Head of caudate nucleus (tissue), 42 donors: ENCODE measurements at regions of chr1 and their contacts with region 1.

Region 1: DNA sequence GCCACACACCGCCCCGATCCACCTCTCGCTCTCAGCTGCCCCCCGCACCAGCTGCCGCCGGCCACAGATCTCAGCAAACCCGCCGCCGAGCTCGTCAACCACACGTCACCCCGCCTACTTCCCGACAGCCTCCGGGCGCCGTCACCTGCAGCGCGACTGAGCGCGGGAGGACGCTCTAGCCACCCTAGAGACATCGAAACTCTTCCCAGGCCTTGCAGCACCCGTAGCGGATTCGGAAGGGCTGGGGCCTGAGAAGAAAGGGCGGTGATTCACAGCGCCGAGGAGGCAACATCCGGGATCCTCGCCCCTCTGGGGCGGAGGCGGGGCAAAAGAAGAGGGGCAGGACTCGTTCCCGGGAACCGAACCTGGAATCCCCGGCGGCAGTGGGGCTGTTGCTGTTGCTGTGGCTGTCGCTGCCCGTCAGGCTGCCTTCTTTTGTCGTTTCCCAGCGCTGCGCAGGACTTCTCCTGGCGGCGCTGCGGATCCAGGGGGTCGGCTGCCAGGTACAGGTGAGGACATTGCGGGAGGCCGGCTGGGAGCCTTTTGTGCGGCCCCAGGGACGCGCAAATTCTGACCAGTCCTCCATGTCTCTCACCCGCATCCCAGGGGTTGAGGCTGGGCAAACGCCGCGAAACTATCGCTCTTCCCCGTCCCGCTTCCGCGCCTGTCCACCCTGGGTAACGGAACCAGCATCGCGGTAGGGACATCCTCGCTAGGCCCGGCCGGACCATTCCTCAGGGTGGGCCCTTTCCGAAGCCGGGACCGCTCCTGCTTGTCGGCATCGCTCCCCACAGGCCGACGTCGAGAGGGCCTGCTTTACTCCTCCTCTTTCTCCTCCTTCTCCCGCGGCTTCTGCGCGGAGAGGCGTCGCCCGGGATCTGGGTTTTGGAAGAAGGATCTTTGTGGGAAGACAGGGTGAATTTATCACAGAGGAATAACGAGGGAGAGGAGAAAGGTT is at the starts of genes RO60 and UCHL5:
- DNase-seq: peak; percentile 95 to 99 (median 97)

Region 2: DNA sequence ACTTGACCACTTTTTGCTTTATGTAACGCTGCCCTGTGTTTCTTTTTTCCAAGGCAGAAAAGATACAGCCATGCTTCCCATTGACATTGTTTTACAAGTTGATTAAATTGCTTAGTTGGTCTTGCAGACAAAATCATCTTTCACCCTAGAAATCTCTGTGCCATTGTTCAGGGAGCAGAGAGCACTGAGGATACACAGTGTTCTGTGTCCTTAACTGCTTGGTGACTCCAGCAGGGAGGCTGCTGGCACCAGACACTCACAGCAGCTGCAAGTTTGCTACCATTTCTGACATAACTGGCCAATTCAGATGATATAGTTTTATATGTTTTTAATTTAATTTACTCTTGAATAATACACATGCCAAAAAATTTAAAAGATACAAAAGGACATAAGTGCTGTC is 132.1 kb before region 1 on chr1:
- intact Hi-C with region 1: no loop called
- DNase-seq: peak in 17 of 42 donors; percentile 4 to 54 (median 18)

Region 3: DNA sequence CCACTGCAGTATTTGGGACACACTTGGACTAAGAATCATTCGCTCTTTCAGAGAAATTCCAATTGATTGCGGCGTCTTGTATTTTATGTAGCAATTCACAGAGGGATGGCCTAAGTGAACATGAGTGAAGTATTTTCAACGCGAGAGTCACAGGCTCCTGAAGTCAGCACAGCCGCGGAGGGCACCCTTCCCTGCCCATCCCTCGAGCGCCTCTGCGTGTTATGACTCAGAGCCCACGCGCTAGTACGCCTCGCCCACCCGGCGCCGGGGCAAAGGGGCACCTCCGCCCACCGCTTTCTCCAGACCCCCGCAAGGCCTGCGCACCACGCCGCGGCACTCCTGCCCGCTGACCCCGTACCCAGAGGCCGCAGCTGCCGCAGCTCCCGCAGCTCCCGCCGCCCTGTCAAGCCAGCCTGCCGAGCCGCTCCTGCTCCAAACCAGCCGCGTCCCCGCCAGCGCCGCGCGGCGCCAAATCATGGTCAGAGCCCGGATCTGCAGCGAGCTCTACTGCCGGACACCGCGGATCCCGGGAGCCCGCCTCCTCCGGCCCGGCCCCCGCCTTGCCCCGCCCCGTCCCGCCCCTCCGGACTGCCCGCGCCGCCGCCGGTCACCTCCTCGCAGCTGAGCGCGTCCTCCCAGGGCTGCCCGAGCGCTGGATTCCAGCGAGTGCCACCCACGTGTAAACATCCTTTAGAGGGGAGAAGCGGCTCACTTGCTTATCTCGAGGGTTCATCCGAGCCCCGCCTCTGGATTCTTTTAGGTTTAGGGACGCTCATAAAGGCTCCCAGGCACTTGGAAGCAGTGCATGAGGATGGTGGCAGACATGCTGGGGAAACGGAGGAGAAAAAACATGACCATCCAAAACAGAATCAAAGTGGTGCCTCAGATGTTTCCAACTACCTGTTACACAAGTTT is 45.6 kb after region 1 on chr1 and contains the start of gene GLRX2:
- intact Hi-C with region 1: loop called (anchors 5 kb)
- DNase-seq: peak; percentile 50 to 93 (median 86)

Region 4: DNA sequence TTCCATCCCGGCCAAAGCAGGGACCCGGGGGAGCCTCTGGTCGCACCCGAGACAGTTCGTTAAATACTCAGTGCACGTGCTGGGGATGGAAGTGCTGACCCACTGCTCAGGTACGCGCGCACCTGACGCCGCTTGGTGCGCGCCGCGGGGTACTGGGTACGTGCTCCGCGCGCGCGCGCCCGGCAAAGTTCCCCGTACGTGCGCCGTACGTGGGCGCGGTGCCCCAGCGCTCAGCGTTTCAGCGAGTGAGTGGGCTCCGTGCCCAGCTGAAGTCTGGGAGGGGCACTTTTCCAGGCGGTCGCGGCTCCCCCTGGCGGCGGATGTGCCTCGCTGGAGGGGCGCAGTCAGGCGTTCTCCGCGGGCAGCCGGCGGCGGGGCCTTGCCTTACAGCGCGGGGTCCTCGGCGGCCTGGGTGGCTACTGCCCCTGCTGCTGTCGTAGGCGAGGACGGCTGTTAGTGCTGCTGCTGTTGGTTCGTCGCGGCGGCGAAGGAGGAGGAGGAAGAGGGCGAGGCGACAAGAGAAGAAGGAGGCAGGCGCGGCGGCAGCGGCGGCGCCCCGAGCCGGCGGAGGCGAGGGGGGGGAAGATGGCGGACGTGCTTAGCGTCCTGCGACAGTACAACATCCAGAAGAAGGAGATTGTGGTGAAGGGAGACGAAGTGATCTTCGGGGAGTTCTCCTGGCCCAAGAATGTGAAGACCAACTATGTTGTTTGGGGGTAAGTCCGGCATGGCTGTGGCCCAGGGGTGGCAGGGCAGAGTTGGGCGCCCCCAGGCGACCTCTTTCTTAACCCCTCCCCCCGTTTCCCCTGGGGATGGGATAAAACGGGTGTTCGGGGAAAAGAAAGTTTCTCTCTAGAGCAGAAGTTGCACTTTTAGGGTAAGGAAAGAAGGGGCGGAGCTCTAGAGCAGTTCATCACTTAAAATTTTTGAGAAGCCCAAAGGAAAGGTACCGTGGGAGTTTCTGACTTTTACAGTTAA is 62.4 kb after region 1 on chr1 and contains the start of gene CDC73:
- intact Hi-C with region 1: loop called (anchors 5 kb)
- DNase-seq: peak; percentile 90 to 99 (median 98)

Region 5: GRCh38 chr1:193216925-193217324 is 157.4 kb after region 1 on chr1:
- intact Hi-C with region 1: no loop called
- DNase-seq: no peak